MCF 10A (cell line): ENCODE measurements at regions of chr5 and their contacts with region 1.

Region 1: DNA sequence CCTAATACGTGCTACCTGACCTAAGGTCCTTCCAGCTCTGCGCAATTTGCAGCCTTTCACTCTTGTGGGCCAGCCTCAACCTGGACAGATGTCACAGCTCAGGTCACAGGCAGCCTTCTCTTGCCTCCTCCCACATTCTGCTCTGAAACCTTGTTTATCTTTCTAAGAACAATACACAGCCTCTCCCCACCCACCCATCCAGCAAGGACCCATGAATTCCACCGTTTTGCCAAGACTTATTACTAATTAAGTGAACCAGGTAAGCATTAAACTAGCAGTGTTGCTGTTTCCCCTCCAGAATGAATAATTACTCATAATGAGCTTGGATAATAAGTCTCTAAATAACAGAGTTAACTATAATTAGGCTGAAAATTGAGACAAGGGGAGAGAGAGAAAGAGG is 11.0 kb downstream of the FABP6 start:
- DNase-seq: no peak
- H3K4me3 Mint-ChIP-seq: no peak overlapping the region
- H3K27ac Mint-ChIP-seq: no peak overlapping the region
- H3K4me1 Mint-ChIP-seq: no peaks in the 10 kb centered on the region
- H3K27me3 Mint-ChIP-seq: peaks cover 18% of the 10 kb centered on the region
- CTCF ChIP-seq: no peak

Region 2: DNA sequence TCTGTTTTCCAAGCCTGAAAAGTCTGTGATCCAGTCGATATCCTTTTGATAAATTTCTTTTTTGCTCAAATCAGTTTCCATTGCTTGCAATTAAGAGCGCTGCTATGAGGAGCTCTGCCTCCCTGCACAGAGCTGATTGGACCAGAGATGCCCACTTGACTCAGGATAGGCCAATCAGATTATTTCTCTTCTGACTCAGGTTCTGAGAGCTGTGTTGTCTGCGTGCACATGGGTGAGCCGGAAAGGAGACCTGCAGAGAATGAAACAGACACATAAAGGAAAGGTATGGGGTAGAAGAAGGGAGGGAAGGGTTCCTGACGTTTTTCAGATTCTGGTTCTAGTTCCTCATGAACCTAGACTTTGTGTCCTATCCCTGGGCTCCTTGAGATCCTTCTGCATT is 26.8 kb before region 1 on chr5:
- CTCF ChIA-PET with region 1: interaction called, 32 read pairs
- POLR2A ChIA-PET with region 1: interaction called, 3 read pairs
- intact Hi-C with region 1: no loop called
- DNase-seq: peak; percentile 22
- H3K4me3 Mint-ChIP-seq: no peak overlapping the region
- H3K27ac Mint-ChIP-seq: no peak overlapping the region
- H3K4me1 Mint-ChIP-seq: no peaks in the 10 kb centered on the region
- H3K27me3 Mint-ChIP-seq: no peaks in the 10 kb centered on the region
- CTCF ChIP-seq: no peak

Region 3: DNA sequence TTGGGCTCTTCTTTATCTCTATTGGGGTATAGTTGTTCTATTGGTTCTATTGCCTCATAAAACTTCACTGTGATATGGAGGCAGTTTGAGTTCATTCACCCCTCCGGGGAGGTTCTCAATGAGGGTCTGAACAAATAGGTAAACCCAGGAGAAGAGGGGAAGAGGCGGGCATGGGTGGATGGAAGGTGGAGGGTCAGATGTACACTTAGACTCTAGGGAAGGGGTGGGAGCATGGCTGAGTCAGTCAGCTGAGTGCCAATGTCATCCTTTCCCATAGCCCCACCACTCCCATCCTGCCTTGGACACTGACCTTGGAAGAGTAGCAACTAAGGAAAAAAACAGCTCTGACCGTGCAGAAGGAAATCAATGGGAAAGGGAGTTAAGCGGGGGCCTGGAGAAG is 21.0 kb before region 1 on chr5:
- CTCF ChIA-PET with region 1: interaction called, 12 read pairs
- POLR2A ChIA-PET with region 1: no interaction called
- intact Hi-C with region 1: no loop called
- DNase-seq: no peak
- H3K4me3 Mint-ChIP-seq: no peak overlapping the region
- H3K27ac Mint-ChIP-seq: no peak overlapping the region
- H3K4me1 Mint-ChIP-seq: no peaks in the 10 kb centered on the region
- H3K27me3 Mint-ChIP-seq: no peaks in the 10 kb centered on the region
- CTCF ChIP-seq: no peak

Region 4: DNA sequence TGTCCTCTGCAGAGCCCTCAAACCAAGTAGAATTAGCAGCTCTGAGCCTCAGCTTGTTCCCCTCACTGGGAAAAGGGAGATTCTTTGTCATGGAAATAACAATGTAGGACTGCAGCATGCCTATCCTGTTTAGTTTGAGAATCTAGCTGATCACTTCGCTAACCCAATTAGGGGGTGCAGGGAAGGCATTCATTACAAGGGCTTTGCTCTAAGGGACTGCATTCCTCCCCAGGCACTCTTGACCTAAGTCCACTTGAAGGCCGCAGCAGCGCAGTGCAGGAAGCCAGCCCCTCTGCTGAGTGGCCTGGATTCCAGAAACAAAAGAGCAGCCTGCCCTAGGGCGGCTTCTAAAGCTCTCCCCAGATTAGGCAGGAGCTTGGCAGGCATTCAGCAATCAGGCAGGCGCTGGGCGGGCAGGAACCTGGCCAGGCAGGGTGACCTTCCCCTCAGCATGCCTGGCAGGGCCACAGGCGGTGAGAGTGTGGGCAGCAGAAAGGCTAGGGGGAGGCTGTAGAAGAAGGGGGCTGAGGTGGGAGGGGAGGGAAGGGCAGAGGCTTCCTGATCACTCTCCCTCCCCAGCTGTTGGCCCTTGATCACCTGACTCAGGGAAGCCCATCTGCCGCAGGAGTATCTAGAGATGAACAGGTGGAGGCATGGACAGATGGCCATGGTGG is 47.2 kb after region 1 on chr5:
- CTCF ChIA-PET with region 1: interaction called, 29 read pairs
- POLR2A ChIA-PET with region 1: interaction called, 3 read pairs
- intact Hi-C with region 1: no loop called
- DNase-seq: peak; percentile 87
- H3K4me3 Mint-ChIP-seq: no peak overlapping the region
- H3K27ac Mint-ChIP-seq: no peak overlapping the region
- H3K4me1 Mint-ChIP-seq: peaks cover 18% of the 10 kb centered on the region
- H3K27me3 Mint-ChIP-seq: no peaks in the 10 kb centered on the region
- CTCF ChIP-seq: no peak